ENCODE measurements at regions of chr15 and their contacts with region 1.

Region 1: GRCh38 chr15:40421246-40422157 is 15.9 kb downstream of the IVD start:
- DNase-seq: no peak
- H3K4me3 ChIP-seq: no peak overlapping the region
- H3K27me3 ChIP-seq: no peaks in the 10 kb centered on the region
- CTCF ChIP-seq: peak; percentile 99

Region 2: GRCh38 chr15:40388946-40389841 is 32.3 kb before region 1 on chr15:
- CTCF ChIA-PET with region 1: no interaction called
- POLR2A ChIA-PET with region 1: no interaction called
- DNase-seq: no peak
- H3K4me3 ChIP-seq: no peak overlapping the region
- H3K27me3 ChIP-seq: no peaks in the 10 kb centered on the region
- CTCF ChIP-seq: no peak

Region 3: GRCh38 chr15:40405501-40406381 is 15.8 kb before region 1 on chr15 and contains the start of gene IVD:
- CTCF ChIA-PET with region 1: interaction called, 31 read pairs
- POLR2A ChIA-PET with region 1: no interaction called
- DNase-seq: peak; percentile 81
- H3K4me3 ChIP-seq: peak within 1 kb of the TSS; percentile 84
- H3K27me3 ChIP-seq: no peaks in the 10 kb centered on the region
- CTCF ChIP-seq: no peak
- polyA plus RNA-seq, gene IVD: 48.6 and 63.9 TPM in 2 replicates

Region 4: GRCh38 chr15:40493089-40493840 is 71.8 kb after region 1 on chr15:
- CTCF ChIA-PET with region 1: no interaction called
- POLR2A ChIA-PET with region 1: no interaction called
- DNase-seq: no peak
- H3K4me3 ChIP-seq: no peak overlapping the region
- H3K27me3 ChIP-seq: peaks cover 3% of the 10 kb centered on the region
- CTCF ChIP-seq: no peak

Region 5: GRCh38 chr15:40593588-40594428 is 172.3 kb after region 1 on chr15 and contains the start of gene KNL1:
- CTCF ChIA-PET with region 1: no interaction called
- POLR2A ChIA-PET with region 1: no interaction called
- DNase-seq: peak; percentile 93
- H3K4me3 ChIP-seq: peak within 1 kb of the TSS; percentile 91
- H3K27me3 ChIP-seq: no peaks in the 10 kb centered on the region; the same call in 1 of the 2 replicates
- CTCF ChIP-seq: no peak
- polyA plus RNA-seq, gene KNL1: 3.9 and 8.5 TPM in 2 replicates

Measured in BJ (cell line).